ENCODE measurements at regions of chr5 and their contacts with region 1.

Region 1: DNA sequence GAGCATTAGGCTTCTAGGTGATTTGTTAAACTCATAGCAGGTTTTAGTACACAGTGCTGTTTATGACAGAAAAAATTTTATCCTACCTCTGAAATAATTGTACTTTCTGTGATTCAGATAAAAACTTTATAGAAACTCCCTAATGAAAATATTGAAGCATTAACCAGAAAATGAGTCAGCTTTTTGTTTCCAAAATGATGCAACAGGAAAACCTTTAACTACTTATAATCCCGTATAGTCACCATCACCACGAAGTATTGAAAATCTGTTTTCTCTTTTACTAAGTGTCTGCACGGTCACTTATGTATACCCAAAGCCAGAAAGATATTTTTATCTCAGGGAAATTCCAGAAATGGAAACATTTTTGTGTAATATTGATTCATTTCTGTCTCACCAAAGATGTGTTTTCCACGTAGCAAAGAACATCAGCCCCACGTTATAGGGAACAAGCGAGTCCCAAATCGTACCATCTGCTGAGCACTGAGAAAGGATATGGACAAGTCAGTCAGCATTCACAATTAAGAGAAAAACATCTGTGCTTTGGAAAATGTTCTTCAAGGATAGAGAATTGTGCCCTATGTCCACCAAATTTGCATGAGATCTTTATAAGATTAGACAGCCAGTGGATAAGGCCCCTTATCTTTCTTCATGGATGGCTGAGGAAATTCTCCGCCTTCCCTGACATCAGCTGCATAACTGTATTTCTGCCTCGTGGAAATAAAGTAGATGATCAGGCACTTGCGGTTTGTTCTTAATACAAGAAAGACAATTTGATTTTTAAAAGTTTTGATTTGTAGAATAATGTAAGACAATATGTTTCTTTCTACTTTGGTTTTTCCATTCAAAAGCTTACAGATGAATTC is 41.9 kb downstream of the TNFAIP8 start:
- DNase-seq: no peak
- H3K4me3 Mint-ChIP-seq: peak overlapping the region; percentile 57
- H3K27ac Mint-ChIP-seq: peak overlapping the region; percentile 91
- H3K4me1 Mint-ChIP-seq: peaks cover 67% of the 10 kb centered on the region
- H3K27me3 Mint-ChIP-seq: no peaks in the 10 kb centered on the region

Region 2: GRCh38 chr5:118999696-119000095 is 398.1 kb before region 1 on chr5:
- intact Hi-C with region 1: no loop called
- DNase-seq: no peak
- H3K4me3 Mint-ChIP-seq: no peak overlapping the region
- H3K27ac Mint-ChIP-seq: no peak overlapping the region
- H3K4me1 Mint-ChIP-seq: no peaks in the 10 kb centered on the region
- H3K27me3 Mint-ChIP-seq: no peaks in the 10 kb centered on the region

Region 3: DNA sequence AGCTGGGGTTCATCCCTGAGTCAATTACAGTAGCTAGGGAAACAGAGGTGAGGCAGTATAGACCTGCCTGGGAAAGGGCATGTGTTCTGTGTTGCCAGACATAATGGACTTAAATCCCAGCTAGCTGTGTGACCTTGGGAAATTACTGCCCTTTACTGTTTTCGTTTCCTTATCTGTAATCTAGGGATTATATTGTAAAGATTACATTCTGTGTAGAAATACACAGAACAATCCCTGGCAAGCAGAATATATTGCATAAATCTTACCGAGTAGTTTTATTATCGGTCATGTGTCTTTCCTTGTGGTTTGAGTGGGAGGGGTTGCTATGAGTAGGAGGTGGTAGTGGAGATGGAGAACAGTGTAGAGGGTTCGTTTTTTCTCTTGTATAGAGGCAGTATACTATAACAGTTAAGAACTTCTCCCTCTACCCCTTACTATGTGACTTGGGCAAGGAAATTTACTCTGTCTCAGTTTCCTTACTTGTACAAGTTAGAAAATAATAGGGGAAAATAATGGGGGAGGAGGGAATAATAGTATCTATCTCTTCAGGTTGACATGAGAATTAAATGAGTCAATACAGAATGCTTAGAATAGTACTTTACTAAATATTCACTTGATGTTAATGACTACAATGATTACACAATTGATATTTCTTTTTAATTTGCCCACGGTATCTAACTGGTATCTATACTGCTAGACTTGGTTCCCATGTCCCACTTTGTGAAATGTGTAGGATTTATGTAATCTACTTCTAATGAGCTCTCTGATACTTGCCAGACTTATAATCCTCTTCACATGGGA is 334.0 kb before region 1 on chr5:
- intact Hi-C with region 1: loop called (anchors 1 kb)
- DNase-seq: no peak
- H3K4me3 Mint-ChIP-seq: peak overlapping the region; percentile 7
- H3K27ac Mint-ChIP-seq: peak overlapping the region; percentile 52
- H3K4me1 Mint-ChIP-seq: peaks cover 14% of the 10 kb centered on the region
- H3K27me3 Mint-ChIP-seq: peaks cover 1% of the 10 kb centered on the region

Region 4: GRCh38 chr5:119267958-119268386 is 129.8 kb before region 1 on chr5:
- intact Hi-C with region 1: loop called (anchors 1 kb)
- DNase-seq: peak; percentile 72
- H3K4me3 Mint-ChIP-seq: peak overlapping the region; percentile 99
- H3K27ac Mint-ChIP-seq: peak overlapping the region; percentile 97
- H3K4me1 Mint-ChIP-seq: peaks cover 55% of the 10 kb centered on the region
- H3K27me3 Mint-ChIP-seq: no peaks in the 10 kb centered on the region

Region 5: DNA sequence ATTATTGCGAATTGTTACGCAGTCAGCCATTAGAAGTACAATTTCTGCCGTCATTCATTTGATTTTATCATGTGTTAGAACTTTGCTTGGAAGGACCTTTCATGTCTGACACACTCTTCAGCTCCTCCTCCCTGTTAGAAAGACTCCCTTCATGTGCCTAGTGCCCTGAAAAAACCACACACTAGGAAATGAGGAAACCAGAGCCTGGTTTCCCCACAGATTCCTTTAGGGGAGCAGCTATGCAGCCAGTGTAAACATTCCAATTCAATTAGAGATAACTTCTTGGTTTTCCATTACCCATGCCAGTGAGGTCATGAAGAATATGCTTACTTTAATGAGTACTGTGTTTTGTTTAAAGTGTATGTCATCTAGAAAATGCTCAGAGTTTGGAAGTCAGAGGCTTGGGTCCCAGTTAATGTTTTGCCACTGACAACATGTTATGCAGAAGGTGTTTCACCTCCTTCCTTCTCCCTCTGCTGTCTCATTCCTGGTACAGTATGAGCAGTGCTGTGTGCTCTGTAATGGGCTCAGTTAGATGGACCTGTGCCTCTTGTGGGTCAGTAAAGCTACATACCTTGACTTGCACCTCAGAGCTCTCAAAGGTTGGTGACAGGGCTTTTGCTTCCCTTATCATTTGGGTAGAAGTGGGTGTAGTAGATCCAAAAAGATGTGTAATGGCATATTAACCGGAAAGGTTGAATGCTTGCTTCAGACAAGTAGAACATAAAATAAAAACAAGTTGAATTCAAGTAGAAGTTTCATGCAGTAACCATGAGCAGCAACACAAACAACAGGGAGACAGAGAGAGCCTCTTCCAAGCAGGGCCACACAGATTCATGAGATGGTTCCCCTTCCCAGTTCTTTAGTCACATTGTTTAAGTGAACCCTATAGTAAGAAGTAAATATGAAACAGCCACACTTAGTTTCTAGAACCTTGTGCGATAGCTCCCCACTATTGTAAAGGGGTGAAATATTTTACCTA is 94.5 kb before region 1 on chr5:
- intact Hi-C with region 1: loop called (anchors 1 kb)
- DNase-seq: no peak
- H3K4me3 Mint-ChIP-seq: peak overlapping the region; percentile 48
- H3K27ac Mint-ChIP-seq: peak overlapping the region; percentile 73
- H3K4me1 Mint-ChIP-seq: peaks cover 87% of the 10 kb centered on the region
- H3K27me3 Mint-ChIP-seq: no peaks in the 10 kb centered on the region

Region 6: DNA sequence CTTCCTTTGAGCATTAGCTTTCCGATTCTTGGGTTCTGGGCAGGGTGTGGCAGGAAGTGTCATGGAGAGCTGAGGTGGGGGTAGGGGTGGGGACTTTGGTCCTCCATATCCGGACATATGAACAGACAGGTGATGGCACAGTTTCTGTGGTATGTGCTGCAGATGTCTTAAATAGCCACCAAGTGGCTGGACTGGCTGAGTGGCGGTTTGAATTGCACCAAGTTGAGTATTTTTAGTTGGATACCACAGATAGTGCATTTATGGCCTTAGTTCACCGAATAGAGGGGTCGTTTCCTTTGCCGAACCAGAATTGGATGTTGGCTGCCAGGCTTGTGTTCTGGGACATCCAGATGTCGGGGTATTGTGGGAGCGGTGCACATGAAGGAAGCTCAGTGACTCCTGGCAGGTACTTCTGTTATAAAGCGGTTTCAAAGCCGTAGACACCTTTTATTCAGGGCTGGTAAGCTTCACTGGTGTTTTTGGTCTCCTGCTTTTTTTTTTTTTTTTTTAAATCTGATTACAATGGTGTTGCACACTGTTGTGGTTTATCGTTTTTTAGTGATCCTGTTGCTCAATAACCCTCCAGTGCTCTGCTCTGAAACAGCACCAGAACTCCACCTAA is 57.0 kb before region 1 on chr5:
- intact Hi-C with region 1: loop called (anchors 1 kb)
- DNase-seq: peak; percentile 63
- H3K4me3 Mint-ChIP-seq: peak overlapping the region; percentile 83
- H3K27ac Mint-ChIP-seq: peak overlapping the region; percentile 100
- H3K4me1 Mint-ChIP-seq: peaks cover 95% of the 10 kb centered on the region
- H3K27me3 Mint-ChIP-seq: no peaks in the 10 kb centered on the region

Region 7: DNA sequence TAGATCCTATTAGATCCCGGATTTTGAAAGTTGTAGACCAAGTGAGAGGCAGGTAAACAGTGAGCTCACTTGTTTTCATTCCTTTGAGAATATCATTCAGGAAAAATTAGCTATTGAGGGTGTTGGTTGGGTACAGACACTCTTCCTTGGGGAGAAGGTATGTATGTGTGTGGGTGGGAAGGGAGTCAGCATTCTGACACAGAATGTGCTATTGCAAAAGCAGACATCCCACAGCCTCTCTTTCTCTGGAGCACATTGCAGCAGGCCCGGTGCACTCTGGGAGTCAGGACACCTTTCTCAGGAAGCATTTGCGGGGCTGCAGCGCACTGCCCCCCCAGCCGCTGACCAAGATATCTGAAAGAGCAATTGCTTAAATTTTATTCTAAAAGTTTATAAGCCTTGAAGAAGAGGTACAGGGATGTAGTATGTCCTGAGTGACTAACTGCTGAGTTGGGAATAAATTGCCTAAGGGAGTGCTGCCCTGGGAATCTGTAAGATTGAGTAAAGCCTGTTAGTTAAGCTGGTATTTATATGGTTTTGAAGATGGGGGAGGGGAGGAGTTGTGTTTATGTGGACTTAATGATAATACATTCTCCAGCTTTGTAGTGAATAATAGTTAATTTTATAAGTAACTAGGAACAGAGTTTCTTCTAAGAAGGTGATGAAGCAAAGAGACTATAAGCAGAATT is 36.7 kb before region 1 on chr5:
- intact Hi-C with region 1: no loop called
- DNase-seq: no peak
- H3K4me3 Mint-ChIP-seq: peak overlapping the region; percentile 95
- H3K27ac Mint-ChIP-seq: peak overlapping the region; percentile 85
- H3K4me1 Mint-ChIP-seq: peaks cover 88% of the 10 kb centered on the region
- H3K27me3 Mint-ChIP-seq: no peaks in the 10 kb centered on the region

Region 8: GRCh38 chr5:119382169-119382568 is 15.6 kb before region 1 on chr5:
- intact Hi-C with region 1: loop called (anchors 2 kb)
- DNase-seq: no peak
- H3K4me3 Mint-ChIP-seq: peak overlapping the region; percentile 46
- H3K27ac Mint-ChIP-seq: peak overlapping the region; percentile 76
- H3K4me1 Mint-ChIP-seq: peaks cover 87% of the 10 kb centered on the region
- H3K27me3 Mint-ChIP-seq: no peaks in the 10 kb centered on the region

Region 9: DNA sequence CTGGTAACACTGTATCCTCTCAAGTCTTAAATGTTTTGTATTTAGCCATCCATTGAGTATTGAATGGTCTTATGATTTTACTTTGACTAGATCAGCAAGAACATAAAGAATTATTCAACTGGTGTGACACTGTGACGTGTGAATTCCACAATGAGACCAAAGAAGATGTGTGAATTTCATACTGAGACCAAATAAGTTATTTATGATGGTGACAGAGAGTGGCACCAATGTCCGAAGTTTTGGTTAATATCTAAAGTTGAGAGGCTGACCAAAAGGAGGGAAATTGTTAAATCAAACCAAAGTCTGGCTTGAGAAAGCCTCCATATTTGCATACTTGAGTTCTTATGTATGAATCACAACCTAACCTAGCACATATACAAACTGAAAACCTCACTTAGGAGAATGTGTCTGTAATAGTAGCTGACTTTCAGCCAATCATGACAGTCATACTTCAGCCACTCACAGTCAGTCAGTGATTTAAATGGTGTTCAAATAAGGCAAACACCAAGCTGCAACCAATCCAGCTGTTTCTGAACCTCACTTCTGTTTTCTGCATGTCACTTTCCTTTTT is 200.1 kb after region 1 on chr5:
- intact Hi-C with region 1: no loop called
- DNase-seq: no peak
- H3K4me3 Mint-ChIP-seq: no peak overlapping the region
- H3K27ac Mint-ChIP-seq: no peak overlapping the region
- H3K4me1 Mint-ChIP-seq: no peaks in the 10 kb centered on the region
- H3K27me3 Mint-ChIP-seq: no peaks in the 10 kb centered on the region

Region 10: DNA sequence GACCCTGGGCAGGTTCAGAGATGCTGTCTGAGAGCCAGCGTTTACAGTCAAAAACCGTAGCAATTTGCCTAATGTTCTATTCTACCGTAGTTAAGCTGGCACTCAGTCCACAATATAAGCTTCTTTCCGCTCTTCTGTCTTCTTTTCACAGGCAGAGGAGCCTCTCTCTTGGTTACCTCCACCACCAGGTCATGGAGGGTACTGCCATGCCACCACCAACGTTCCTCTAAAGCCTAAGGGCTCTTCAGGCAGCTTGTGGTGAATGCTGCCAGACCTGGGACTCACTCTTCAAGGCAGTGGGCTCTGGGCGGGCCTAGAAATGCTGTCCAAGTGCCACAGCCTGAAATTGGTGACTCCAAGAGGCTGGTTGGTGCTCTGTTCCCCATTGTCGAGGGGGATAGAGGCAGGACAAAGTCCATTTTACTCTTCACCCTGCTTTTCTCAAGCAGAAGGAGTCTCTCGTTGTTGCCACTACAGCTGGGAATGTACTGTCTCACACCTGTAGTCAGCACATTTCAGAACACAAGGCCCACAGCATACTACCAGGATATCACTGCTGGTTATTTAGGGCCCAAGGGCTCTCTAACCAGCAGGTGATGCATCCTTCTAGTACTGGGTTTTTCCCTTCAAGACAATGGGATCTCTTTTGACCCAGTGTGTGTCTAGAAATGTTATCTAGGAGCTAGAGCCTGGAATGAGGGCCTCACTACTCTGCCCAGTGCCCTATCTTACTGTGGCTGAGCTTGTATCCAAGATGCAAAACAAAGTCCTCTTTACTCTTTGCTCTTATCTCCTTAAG is 831.1 kb after region 1 on chr5:
- intact Hi-C with region 1: no loop called
- DNase-seq: no peak
- H3K4me3 Mint-ChIP-seq: no peak overlapping the region
- H3K27ac Mint-ChIP-seq: no peak overlapping the region
- H3K4me1 Mint-ChIP-seq: no peaks in the 10 kb centered on the region
- H3K27me3 Mint-ChIP-seq: no peaks in the 10 kb centered on the region